Activated CD4-positive, alpha-beta T cell treated with anti-CD3 and anti-CD28 coated beads for 36 hours (primary cell): ENCODE measurements at regions of chr1 and their contacts with region 1.

Region 1: GRCh38 chr1:42146626-42147320 is 6.4 kb upstream of the GUCA2B start:
- DNase-seq: peak; percentile 84
- ATAC-seq: peak; percentile 84
- H3K4me3 Mint-ChIP-seq: no peak overlapping the region
- H3K27ac Mint-ChIP-seq: no peak overlapping the region
- H3K4me1 Mint-ChIP-seq: peaks cover 7% of the 10 kb centered on the region
- H3K27me3 Mint-ChIP-seq: peaks cover 14% of the 10 kb centered on the region

Region 2: GRCh38 chr1:42730988-42731387 is 584.2 kb after region 1 on chr1:
- CTCF ChIA-PET with region 1: interaction called, 4 read pairs
- POLR2A ChIA-PET with region 1: no interaction called
- intact Hi-C with region 1: loop called in 1 of 2 experiments (anchors 1 kb)
- DNase-seq: peak; percentile 83
- ATAC-seq: peak; percentile 87
- H3K4me3 Mint-ChIP-seq: no peak overlapping the region
- H3K27ac Mint-ChIP-seq: no peak overlapping the region
- H3K4me1 Mint-ChIP-seq: peaks cover 3% of the 10 kb centered on the region
- H3K27me3 Mint-ChIP-seq: no peaks in the 10 kb centered on the region

Region 3: GRCh38 chr1:42747125-42747524 is 600.4 kb after region 1 on chr1:
- CTCF ChIA-PET with region 1: no interaction called
- POLR2A ChIA-PET with region 1: no interaction called
- intact Hi-C with region 1: loop called in 1 of 2 experiments (anchors 1 kb)
- DNase-seq: peak; percentile 67
- ATAC-seq: peak; percentile 39
- H3K4me3 Mint-ChIP-seq: no peak overlapping the region
- H3K27ac Mint-ChIP-seq: no peak overlapping the region
- H3K4me1 Mint-ChIP-seq: no peaks in the 10 kb centered on the region
- H3K27me3 Mint-ChIP-seq: no peaks in the 10 kb centered on the region